ENCODE measurements at regions of chr1 and their contacts with region 1.

Region 1: GRCh38 chr1:4298361-4299083 is 355.9 kb upstream of the AJAP1 start:
- ATAC-seq: peak in 3 of 8 experiments; percentile 13 to 39 (median 21)
- H3K4me3 ChIP-seq: no peak overlapping the region
- H3K27ac ChIP-seq: no peak overlapping the region
- H3K4me1 ChIP-seq: peaks cover 0 to 28% of the 10 kb centered on the region in 2 donors

Region 2: DNA sequence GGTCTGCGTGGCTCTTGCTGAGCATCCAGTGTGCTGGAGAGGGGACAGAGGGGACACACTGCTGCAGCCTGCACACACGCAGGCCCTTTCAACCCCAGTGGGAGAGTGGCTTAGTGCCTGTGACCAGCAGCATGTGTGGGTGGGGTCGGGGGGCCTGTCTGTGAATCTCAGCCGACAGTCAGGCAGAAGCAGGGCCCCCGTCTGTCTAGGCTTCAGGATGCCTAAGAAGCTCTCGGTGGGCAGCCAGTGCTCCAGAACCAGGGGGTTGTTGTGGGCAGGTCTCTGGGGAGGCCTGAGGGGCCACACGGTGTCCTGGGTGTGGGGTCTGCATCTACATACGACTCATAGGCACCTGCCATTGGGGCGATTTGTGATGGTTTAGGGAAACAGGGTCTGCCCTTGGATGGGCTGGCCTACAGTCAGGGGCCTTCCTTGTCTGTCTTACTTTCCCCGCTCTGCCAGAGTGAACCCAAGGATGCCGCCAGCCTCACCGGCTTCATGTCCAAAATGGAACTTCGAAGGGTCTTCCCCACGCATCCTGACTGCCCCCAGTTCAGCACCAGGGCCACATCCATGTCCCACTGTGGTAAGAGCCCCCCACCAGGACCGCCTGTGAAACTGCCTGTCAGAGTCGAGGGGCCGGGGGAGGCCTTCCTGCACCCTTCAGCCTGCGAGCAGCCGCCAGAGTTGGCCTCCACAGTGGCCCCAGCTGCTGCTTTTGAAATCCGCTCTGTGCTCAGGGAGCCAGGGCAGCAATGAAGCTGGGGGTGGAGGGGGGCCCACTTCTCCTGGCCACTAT is 544.7 kb before region 1 on chr1:
- in situ Hi-C with region 1: no loop called
- ATAC-seq: no peak
- H3K4me3 ChIP-seq: no peak overlapping the region
- H3K27ac ChIP-seq: no peak overlapping the region
- H3K4me1 ChIP-seq: no peaks in the 10 kb centered on the region

Region 3: DNA sequence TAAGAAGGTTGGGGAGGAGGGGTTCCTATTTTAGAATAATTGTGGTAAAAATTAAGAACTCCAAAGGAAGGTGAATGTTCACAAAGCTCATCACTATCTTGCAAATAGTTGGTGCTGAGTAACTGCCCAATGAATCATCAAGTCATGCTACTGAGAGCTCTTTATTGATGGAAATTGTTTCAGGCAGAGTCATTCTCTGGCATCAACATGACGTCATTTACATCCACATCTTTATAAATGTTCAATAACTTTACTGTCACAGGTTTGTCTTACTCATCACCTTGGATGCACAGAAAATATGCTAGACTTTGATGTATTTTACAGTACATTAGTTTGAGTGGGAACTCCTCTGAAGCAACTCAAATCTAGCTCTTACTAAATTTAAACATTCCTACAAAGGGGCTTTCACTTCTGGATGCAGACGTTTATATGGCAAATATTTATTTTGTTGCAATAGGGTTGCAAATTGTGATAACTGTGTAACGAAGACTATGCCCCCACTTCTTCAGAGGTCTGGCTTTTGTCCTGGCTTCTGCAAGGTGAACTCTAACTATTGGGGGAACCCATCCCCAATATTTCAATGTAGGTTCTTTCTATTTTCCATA is 82.1 kb after region 1 on chr1:
- in situ Hi-C with region 1: loop called in 1 of 9 experiments (anchors 25 kb)
- ATAC-seq: peak in 3 of 8 experiments; percentile 65 to 92 (median 68)
- H3K4me3 ChIP-seq: no peak overlapping the region
- H3K27ac ChIP-seq: no peak overlapping the region
- H3K4me1 ChIP-seq: peaks cover 0 to 3% of the 10 kb centered on the region in 2 donors

Measured in motor neuron (in vitro differentiated cells).